Common myeloid progenitor, CD34-positive (primary cell): ENCODE measurements at regions of chr6 and their contacts with region 1.

Region 1: DNA sequence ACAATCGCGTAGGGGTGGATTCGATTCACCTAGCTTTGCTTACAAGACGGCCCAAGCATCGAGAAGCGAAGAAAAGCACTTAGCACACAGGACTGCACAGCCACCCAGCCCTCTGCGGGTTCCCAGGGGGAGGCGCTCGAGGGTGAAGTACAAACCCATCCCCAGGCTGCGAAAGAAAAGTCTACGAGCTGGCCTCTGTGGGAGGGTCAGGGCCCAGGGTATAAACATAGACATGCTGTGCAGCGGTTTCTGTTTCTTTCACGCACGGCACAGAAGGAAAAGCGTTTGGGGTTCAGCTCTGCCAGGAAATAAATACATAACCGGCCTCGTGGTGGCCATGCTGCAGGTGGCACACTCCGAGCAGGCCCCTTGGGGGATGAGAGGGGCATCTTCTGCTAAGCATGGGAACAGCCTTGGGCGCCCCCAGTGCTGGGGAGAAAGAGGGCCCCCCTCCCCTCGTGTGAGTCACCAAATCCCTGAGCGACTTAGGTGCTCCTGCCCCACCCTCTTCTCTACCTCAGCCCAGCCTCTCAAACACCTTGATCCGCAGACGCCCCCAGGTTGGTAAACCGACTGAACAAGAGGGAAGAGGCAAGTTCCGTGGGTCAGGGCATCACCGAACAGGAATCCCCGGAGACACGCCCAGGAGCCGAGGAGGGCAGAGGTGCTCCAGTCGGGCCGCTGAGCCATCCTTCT is 91.6 kb upstream of the RIPOR2 start:
- DNase-seq: peak in 2 of 3 donors; percentile 44 to 53
- H3K4me3 ChIP-seq: peak overlapping the region in 3 of 7 experiments; percentile 4 to 48 (median 46)
- H3K27ac ChIP-seq: peak overlapping the region; percentile 46 to 50
- H3K4me1 ChIP-seq: peaks cover 19 to 59% (median 48%) of the 10 kb centered on the region in 4 experiments
- H3K27me3 ChIP-seq: no peaks in the 10 kb centered on the region

Region 2: GRCh38 chr6:25006565-25007001 is 20.8 kb before region 1 on chr6:
- CTCF ChIA-PET with region 1: interaction called, 11 read pairs
- POLR2A ChIA-PET with region 1: interaction called, 3 read pairs
- DNase-seq: peak; percentile 78 to 91 (median 90)
- H3K4me3 ChIP-seq: peak overlapping the region in 5 of 7 experiments; percentile 12 to 42 (median 29)
- H3K27ac ChIP-seq: peak overlapping the region; percentile 96 to 97
- H3K4me1 ChIP-seq: peaks cover 35 to 91% (median 67%) of the 10 kb centered on the region in 4 experiments
- H3K27me3 ChIP-seq: no peaks in the 10 kb centered on the region

Region 3: GRCh38 chr6:25042036-25042521 is 14.7 kb after region 1 on chr6:
- CTCF ChIA-PET with region 1: interaction called, 51 read pairs
- POLR2A ChIA-PET with region 1: interaction called, 3 read pairs
- DNase-seq: peak in 2 of 3 donors; percentile 76 to 86
- H3K4me3 ChIP-seq: peak overlapping the region; percentile 42 to 96 (median 89)
- H3K27ac ChIP-seq: peak overlapping the region; percentile 97
- H3K4me1 ChIP-seq: peaks cover 28 to 61% (median 42%) of the 10 kb centered on the region in 4 experiments
- H3K27me3 ChIP-seq: no peaks in the 10 kb centered on the region

Region 4: DNA sequence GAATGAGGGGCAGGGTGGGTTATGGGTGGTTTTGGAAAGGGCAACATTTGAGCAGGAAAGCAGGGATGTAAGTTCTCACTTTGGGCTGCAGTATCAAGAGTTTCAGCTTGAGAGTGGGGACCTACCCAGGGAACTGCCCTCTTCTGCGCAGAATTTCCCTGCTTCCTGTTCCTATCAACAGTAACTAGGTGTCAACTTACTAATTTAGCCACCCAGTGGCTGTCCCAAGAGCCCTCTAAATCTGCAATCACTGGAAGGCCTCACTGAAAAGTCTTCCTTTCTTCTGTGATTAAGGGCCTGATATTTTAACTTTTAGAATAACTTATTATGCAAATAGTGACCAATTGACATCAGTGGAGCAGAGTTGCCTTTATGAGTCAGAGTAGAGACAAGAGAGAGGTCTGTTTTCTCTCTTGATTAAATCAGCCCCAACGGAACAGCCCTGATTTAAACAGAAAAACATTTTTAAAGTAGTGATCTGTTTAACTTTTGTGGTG is 26.6 kb after region 1 on chr6:
- CTCF ChIA-PET with region 1: interaction called, 63 read pairs
- POLR2A ChIA-PET with region 1: no interaction called
- DNase-seq: peak in 2 of 3 donors; percentile 71 to 77
- H3K4me3 ChIP-seq: peak overlapping the region in 2 of 7 experiments; percentile 4 to 23
- H3K27ac ChIP-seq: no peak overlapping the region
- H3K4me1 ChIP-seq: peaks cover 47 to 94% (median 83%) of the 10 kb centered on the region in 4 experiments
- H3K27me3 ChIP-seq: no peaks in the 10 kb centered on the region

Region 5: DNA sequence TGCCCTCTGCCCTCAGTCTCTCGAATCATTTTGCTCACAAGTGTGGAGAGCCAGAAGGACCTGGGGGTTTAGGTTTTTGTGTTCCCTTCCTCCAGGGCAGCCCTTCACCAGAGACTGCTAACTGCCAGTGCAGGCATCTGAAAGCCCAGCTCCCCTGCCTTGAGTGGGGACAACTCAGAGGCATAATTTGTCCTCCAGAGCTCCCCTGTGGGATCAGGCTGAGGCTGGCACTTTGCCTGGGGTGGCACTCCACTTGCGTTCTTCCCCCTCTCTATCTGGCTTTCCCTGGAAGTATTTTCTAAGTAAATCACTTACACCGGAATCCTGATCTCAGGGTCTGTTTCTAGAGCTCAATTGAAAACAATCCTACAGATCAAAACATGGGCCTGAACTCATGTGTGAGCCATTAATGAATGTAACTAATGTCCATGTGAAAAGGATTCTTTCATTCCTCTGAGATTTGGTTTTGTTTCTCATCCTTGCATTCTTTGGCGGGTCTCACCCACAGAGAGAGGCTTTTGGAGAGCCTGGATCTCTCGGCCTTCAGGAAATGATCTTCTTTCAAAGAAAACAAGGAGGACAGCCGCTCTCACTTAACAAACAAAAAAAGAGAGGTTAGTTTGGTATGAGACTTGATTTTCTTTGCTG is 34.0 kb after region 1 on chr6:
- CTCF ChIA-PET with region 1: interaction called, 63 read pairs
- POLR2A ChIA-PET with region 1: no interaction called
- DNase-seq: no peak
- H3K4me3 ChIP-seq: no peak overlapping the region
- H3K27ac ChIP-seq: no peak overlapping the region
- H3K4me1 ChIP-seq: peaks cover 9 to 45% (median 26%) of the 10 kb centered on the region in 4 experiments
- H3K27me3 ChIP-seq: no peaks in the 10 kb centered on the region

Region 6: GRCh38 chr6:25070547-25071366 is 43.4 kb after region 1 on chr6:
- CTCF ChIA-PET with region 1: interaction called, 24 read pairs
- POLR2A ChIA-PET with region 1: interaction called, 3 read pairs
- DNase-seq: peak; percentile 88 to 94 (median 93)
- H3K4me3 ChIP-seq: peak overlapping the region in 1 of 7 experiments; percentile 42
- H3K27ac ChIP-seq: peak overlapping the region in 1 of 2 experiments; percentile 26
- H3K4me1 ChIP-seq: peaks cover 0 to 7% (median 1%) of the 10 kb centered on the region in 4 experiments
- H3K27me3 ChIP-seq: no peaks in the 10 kb centered on the region